Thyroid gland (tissue), 4 donors: ENCODE measurements at regions of chrX and their contacts with region 1.

Region 1: GRCh38 chrX:70554081-70554480 is 109.4 kb downstream of the DLG3 start:
- DNase-seq: no peak
- H3K4me3 ChIP-seq: no peak overlapping the region
- H3K27ac ChIP-seq: no peak overlapping the region
- H3K4me1 ChIP-seq: no peaks in the 10 kb centered on the region
- H3K27me3 ChIP-seq: no peaks in the 10 kb centered on the region
- CTCF ChIP-seq: peak in 4 of 6 experiments; percentile 15 to 60 (median 46)
- POLR2A ChIP-seq: no peak

Region 2: GRCh38 chrX:70454441-70455365 is 99.4 kb before region 1 on chrX:
- intact Hi-C with region 1: loop called (anchors 5 kb)
- DNase-seq: peak; percentile 94 to 96
- H3K4me3 ChIP-seq: peak overlapping the region; percentile 44 to 65 (median 53)
- H3K27ac ChIP-seq: peak overlapping the region; percentile 70 to 92 (median 78)
- H3K4me1 ChIP-seq: no peaks in the 10 kb centered on the region
- H3K27me3 ChIP-seq: no peaks in the 10 kb centered on the region
- CTCF ChIP-seq: peak; percentile 56 to 83 (median 79)
- POLR2A ChIP-seq: peak in 1 of 2 donors; percentile 52

Region 3: DNA sequence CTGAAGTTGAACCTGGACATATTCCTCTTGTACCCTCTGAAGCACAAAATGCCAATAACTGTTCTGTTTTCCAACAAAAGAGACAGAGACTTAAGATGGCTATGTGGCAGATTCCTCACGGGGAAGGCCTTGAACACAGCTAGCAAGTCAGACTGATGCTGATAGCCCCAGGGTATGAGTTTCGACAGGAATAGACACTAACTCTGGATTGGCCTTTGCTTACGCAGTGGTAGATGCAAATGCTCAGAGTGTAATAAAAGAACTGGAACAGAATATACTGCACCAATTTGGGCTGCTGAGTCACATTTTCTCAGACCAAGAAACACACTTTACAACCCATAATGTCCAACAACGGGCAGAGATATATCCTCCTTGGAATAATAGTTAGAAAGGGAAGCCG is 64.4 kb after region 1 on chrX:
- intact Hi-C with region 1: no loop called
- DNase-seq: no peak
- H3K4me3 ChIP-seq: no peak overlapping the region
- H3K27ac ChIP-seq: no peak overlapping the region
- H3K4me1 ChIP-seq: no peaks in the 10 kb centered on the region
- H3K27me3 ChIP-seq: no peaks in the 10 kb centered on the region
- CTCF ChIP-seq: no peak
- POLR2A ChIP-seq: no peak

Region 4: GRCh38 chrX:70755850-70756249 is 201.8 kb after region 1 on chrX:
- intact Hi-C with region 1: no loop called
- DNase-seq: peak; percentile 3
- H3K4me3 ChIP-seq: no peak overlapping the region
- H3K27ac ChIP-seq: no peak overlapping the region
- H3K4me1 ChIP-seq: no peaks in the 10 kb centered on the region
- H3K27me3 ChIP-seq: no peaks in the 10 kb centered on the region
- CTCF ChIP-seq: no peak
- POLR2A ChIP-seq: no peak